Heart left ventricle (tissue), 16 donors: ENCODE measurements at regions of chr11 and their contacts with region 1.

Region 1: DNA sequence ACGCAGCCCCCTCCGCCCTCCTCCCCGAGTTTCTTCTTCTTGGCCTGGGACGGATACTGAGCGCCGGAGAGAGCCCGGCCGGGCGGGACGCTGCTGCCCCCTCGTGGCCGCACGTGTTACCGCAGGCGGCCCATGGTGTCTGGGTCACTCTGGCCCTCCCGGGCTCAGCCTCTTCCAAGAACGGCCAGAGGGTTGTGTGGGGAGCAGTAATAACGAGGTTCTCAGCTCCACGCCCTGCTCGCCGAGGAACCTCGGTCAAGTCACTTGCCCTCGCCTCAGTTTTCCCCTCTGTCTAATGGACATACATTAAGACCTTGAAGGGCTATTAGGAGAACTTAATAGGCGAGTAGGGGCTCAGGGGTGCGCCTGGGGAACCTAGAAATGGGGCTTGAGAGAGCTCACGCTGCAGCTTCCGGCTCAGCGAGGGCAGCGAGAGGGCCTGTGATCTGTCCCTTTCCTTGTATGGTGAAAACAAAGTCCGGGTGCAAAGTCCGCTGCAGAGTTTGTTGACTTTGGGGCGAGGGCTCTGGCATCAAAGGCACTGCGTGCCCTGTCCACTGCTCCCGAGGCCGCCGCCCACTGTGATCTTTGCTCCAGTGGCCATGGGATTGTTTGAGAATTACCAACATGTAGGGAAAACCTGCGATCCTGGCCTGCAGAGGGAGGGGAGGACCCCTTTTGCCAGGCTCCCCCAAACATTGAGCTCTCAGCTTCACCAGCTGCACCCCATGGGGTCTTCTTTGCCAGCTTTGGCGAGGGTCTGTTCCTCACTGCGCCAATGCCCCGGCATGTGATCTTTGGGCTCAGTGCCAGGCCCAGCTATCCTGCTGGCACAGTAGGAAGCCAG is 14.4 kb upstream of the LRP5 start:
- DNase-seq: peak; percentile 77 to 92 (median 80)
- ATAC-seq: peak; percentile 93 to 97 (median 96)
- H3K4me3 ChIP-seq: peak overlapping the region in 5 of 12 donors; percentile 3 to 28 (median 10)
- H3K27ac ChIP-seq: no peak overlapping the region
- H3K4me1 ChIP-seq: peaks cover 0 to 22% (median 12%) of the 10 kb centered on the region in 12 donors
- H3K27me3 ChIP-seq: no peaks in the 10 kb centered on the region
- CTCF ChIP-seq: peak in 11 of 12 donors; percentile 94 to 99 (median 98)
- POLR2A ChIP-seq: no peak

Region 2: DNA sequence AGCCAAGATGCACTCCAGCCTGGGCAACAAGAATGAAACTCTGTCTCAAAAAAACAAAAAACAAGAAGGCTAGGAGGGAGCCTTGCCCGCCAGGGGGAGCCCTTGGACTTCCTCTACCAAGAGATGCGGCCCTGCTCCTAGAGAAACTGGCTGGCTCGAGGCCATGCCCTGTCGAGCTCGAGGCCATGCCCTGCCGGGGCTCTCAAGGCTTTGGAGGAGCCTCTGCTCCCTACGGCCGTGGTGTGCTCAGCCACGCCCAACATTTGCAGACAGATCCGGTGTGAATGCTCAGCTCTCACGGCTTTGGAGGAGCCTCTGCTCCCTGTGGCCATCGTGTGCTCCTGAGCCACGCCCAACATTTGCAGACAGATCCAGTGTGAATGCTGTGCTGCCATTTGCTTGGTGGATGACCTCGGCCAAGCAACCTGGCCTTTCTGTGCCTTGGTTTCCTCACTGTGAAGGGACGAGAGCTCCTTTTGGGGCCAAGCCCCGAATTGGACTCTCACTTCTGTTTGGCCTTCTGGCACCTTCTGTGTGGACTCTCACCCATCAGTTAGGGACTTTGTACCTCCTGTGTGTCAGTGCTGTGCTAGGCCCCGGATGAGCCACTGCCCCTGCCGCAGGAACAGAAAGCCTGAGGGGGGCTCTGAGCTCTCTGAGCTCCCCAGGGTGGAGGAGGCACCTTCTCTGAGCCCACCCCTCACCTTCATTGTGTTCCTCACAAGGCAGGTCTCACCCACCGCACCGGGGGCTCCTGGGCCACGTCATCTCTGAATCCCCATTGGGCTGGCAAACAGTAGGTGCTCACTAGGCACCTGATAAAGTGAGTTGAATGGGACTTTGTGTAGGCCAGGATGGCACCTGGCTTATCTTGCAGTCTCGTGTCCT is 40.3 kb before region 1 on chr11:
- intact Hi-C with region 1: loop called (anchors 1 to 5 kb)
- DNase-seq: peak; percentile 92 to 97 (median 96)
- ATAC-seq: peak; percentile 61 to 88 (median 84)
- H3K4me3 ChIP-seq: peak overlapping the region in 5 of 12 donors; percentile 18 to 38 (median 26)
- H3K27ac ChIP-seq: peak overlapping the region in 2 of 12 donors; percentile 17 to 39
- H3K4me1 ChIP-seq: peaks cover 0 to 24% (median 8%) of the 10 kb centered on the region in 12 donors
- H3K27me3 ChIP-seq: no peaks in the 10 kb centered on the region
- CTCF ChIP-seq: peak; percentile 83 to 93 (median 89)
- POLR2A ChIP-seq: no peak

Region 3: GRCh38 chr11:68271781-68272608 is 26.0 kb before region 1 on chr11 and contains the start of gene C11orf24:
- intact Hi-C with region 1: loop called in 1 of 10 experiments (anchors 1 kb)
- DNase-seq: peak; percentile 96 to 99 (median 96)
- ATAC-seq: peak; percentile 94 to 98 (median 97)
- H3K4me3 ChIP-seq: peak within 1 kb of the TSS; percentile 52 to 95 (median 82)
- H3K27ac ChIP-seq: peak within 1 kb of the TSS; percentile 85 to 99 (median 96)
- H3K4me1 ChIP-seq: peaks cover 8 to 43% (median 31%) of the 10 kb centered on the region in 12 donors
- H3K27me3 ChIP-seq: no peaks in the 10 kb centered on the region
- CTCF ChIP-seq: no peak
- POLR2A ChIP-seq: peak in 1 of 2 donors; percentile 88
- total RNA-seq, gene C11orf24: 17.6 to 47.1 (median 31.6) TPM